ENCODE measurements at regions of chr3 and their contacts with region 1.

Region 1: DNA sequence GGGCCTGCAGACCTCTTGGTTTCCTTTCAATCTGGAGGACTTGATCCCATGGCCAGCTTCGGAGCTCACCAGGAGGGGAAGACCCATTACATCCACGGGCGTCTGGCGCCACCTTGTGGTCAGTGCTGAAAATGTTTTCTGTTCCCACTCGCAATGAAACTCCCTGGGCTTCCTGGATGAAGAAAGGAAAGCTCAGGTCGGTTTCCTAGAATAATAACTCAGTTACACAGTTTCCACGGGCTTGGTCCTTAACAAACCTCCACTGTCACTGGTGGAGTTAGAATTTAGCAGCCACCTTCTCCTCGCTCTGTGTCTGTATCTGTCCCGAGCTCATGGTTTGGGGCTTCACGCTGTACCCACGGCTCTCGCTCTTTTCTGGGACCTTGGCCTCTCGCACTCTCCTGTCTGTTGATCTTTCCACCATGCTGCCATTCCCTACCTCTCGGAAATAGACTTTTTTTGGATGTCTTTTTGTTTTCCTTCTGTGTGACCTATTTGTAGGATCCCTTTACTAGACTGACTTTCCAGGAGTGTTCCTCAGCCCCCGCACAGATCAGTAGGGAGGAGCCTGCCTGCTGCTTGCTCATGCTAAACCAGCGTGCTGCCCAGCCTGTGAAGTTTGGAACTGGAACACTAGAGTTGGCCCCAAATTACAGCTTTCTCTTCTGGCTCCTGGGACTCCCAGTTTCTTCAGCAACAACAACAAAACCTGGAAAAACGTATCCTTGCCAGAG is 56.3 kb downstream of the IL20RB start:
- DNase-seq: peak; percentile 84
- H3K4me3 ChIP-seq: no peak overlapping the region
- H3K27ac ChIP-seq: no peak overlapping the region
- H3K4me1 ChIP-seq: no peaks in the 10 kb centered on the region
- CTCF ChIP-seq: peak; percentile 95

Region 2: DNA sequence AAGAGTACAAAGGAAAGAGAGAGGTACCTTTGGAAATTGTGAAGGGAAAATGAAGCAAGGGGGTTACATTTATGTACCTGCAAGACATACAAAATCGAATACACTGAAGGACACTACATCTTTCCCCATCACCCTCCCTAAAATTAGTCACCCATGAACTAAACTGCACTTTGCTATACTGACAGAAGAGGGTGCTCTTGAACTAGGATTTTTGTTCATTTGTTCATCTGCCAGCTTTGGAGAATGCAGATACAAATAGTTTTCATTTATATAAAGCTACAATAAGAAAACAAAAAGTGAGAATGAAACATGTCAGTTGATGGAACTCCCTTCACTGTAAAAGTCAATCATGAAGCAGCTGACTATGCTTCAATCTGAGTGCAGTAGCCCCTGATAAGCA is 708.2 kb before region 1 on chr3:
- CTCF ChIA-PET with region 1: interaction called, 5 read pairs
- POLR2A ChIA-PET with region 1: no interaction called
- intact Hi-C with region 1: loop called (anchors 1 kb)
- DNase-seq: peak; percentile 62
- H3K4me3 ChIP-seq: no peak overlapping the region
- H3K27ac ChIP-seq: no peak overlapping the region
- H3K4me1 ChIP-seq: no peaks in the 10 kb centered on the region
- CTCF ChIP-seq: peak; percentile 85

Region 3: GRCh38 chr3:136390574-136390973 is 623.5 kb before region 1 on chr3:
- CTCF ChIA-PET with region 1: no interaction called
- POLR2A ChIA-PET with region 1: no interaction called
- intact Hi-C with region 1: loop called (anchors 2 kb)
- DNase-seq: no peak
- H3K4me3 ChIP-seq: no peak overlapping the region
- H3K27ac ChIP-seq: no peak overlapping the region
- H3K4me1 ChIP-seq: no peaks in the 10 kb centered on the region
- CTCF ChIP-seq: no peak

Region 4: GRCh38 chr3:136545664-136546268 is 468.4 kb before region 1 on chr3:
- CTCF ChIA-PET with region 1: interaction called, 4 read pairs
- POLR2A ChIA-PET with region 1: interaction called, 3 read pairs
- intact Hi-C with region 1: loop called (anchors 10 kb)
- DNase-seq: no peak
- H3K4me3 ChIP-seq: no peak overlapping the region
- H3K27ac ChIP-seq: no peak overlapping the region
- H3K4me1 ChIP-seq: peaks cover 10% of the 10 kb centered on the region
- CTCF ChIP-seq: peak; percentile 53; the same call in 1 of the 2 replicates

Region 5: DNA sequence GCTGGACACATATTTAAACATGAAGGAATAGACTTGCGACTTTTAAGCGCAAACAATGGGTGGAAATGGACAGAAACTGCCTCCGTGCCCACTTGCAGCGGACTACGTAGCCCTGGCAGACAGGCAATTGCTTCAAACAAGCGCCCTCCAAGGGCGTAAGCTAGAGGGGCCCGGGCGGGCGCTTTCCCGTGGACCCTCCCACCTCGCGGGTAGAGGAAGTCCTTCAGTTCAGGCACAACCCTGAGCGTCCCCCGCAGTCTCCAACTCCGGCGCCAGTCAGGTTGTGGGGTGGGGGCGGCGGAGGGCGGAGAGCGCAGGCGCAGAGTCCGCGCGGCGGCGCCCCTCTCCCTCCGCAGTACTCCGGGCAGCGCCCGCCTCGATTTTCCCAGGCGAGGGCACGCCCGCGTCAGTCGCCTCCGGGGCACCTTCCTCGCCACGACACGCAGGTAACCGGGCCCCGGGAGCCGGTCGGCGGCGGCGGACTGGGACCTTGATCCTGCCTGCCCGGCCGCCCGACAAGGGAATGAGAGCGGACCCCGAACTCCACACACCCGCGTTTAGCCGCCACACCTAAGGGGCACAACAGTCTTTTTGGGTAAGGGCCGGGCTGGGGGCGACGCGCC is 195.2 kb before region 1 on chr3 and contains the start of gene SLC35G2:
- CTCF ChIA-PET with region 1: no interaction called
- POLR2A ChIA-PET with region 1: no interaction called
- intact Hi-C with region 1: loop called (anchors 5 kb)
- DNase-seq: peak; percentile 29
- H3K4me3 ChIP-seq: peak within 1 kb of the TSS; percentile 63
- H3K27ac ChIP-seq: no peak within 1 kb of the TSS
- H3K4me1 ChIP-seq: peaks cover 11% of the 10 kb centered on the region
- CTCF ChIP-seq: no peak
- total RNA-seq, gene SLC35G2: 0.13 TPM in 1 of 2 replicates, not detected in the other

Region 6: GRCh38 chr3:136994772-136995516 is 19.2 kb before region 1 on chr3:
- CTCF ChIA-PET with region 1: no interaction called
- POLR2A ChIA-PET with region 1: no interaction called
- intact Hi-C with region 1: no loop called
- DNase-seq: no peak
- H3K4me3 ChIP-seq: no peak overlapping the region
- H3K27ac ChIP-seq: no peak overlapping the region
- H3K4me1 ChIP-seq: no peaks in the 10 kb centered on the region
- CTCF ChIP-seq: no peak